Right ventricle myocardium inferior (tissue), 1 donor: ENCODE measurements at regions of chr20 and their contacts with region 1.

Region 1: DNA sequence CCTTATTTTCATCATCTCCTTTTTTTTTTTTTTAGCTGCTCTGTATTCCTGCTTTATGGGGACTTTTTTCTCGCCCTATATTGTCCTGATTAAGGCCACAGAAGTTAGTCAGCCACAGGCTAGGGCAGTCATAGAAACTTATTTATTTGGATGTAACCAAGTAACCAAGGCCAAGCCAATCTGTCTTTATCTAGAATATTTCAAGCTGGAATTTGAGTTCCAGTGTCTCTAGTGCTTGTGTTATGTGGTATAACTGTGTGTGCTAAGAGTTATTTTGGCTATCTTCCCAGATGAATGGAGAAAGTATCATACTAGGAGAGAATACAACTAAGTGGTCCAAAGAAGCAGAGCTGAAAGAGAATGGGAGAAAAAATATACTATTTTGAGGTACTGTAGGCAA is 751.5 kb downstream of the CBLN4 start:
- DNase-seq: no peak
- ATAC-seq: peak; percentile 95

Region 2: GRCh38 chr20:55172310-55172995 is 81.3 kb before region 1 on chr20:
- intact Hi-C with region 1: loop called (anchors 5 kb)
- DNase-seq: no peak
- ATAC-seq: no peak